Mammary epithelial cell (primary cell): ENCODE measurements at regions of chr6 and their contacts with region 1.

Region 1: GRCh38 chr6:47787620-47788497 is 6.0 kb downstream of the OPN5 start:
- DNase-seq: peak; percentile 98
- H3K4me3 ChIP-seq: no peak overlapping the region
- H3K27ac ChIP-seq: peak overlapping the region; percentile 94
- H3K4me1 ChIP-seq: peaks cover 19% of the 10 kb centered on the region
- H3K27me3 ChIP-seq: no peaks in the 10 kb centered on the region
- CTCF ChIP-seq: peak; percentile 88 to 93

Region 2: GRCh38 chr6:48078120-48078519 is 290.3 kb after region 1 on chr6:
- CTCF ChIA-PET with region 1: interaction called, 3 read pairs
- dilution Hi-C with region 1: no loop called
- in situ Hi-C with region 1: no loop called
- intact Hi-C with region 1: loop called (anchors 2 kb)
- DNase-seq: peak; percentile 57
- H3K4me3 ChIP-seq: no peak overlapping the region
- H3K27ac ChIP-seq: no peak overlapping the region
- H3K4me1 ChIP-seq: peaks cover 14% of the 10 kb centered on the region
- H3K27me3 ChIP-seq: no peaks in the 10 kb centered on the region
- CTCF ChIP-seq: no peak

Region 3: GRCh38 chr6:48449002-48449401 is 661.1 kb after region 1 on chr6:
- CTCF ChIA-PET with region 1: no interaction called
- dilution Hi-C with region 1: no loop called
- in situ Hi-C with region 1: no loop called
- intact Hi-C with region 1: loop called (anchors 1 kb)
- DNase-seq: peak; percentile 14
- H3K4me3 ChIP-seq: no peak overlapping the region
- H3K27ac ChIP-seq: no peak overlapping the region
- H3K4me1 ChIP-seq: no peaks in the 10 kb centered on the region
- H3K27me3 ChIP-seq: no peaks in the 10 kb centered on the region
- CTCF ChIP-seq: peak; percentile 14 to 49

Region 4: GRCh38 chr6:48765352-48765961 is 977.6 kb after region 1 on chr6:
- CTCF ChIA-PET with region 1: interaction called, 9 read pairs
- dilution Hi-C with region 1: no loop called
- in situ Hi-C with region 1: loop called (anchors 10 to 25 kb)
- intact Hi-C with region 1: loop called (anchors 1 kb)
- DNase-seq: peak; percentile 58
- H3K4me3 ChIP-seq: no peak overlapping the region
- H3K27ac ChIP-seq: peak overlapping the region; percentile 62
- H3K4me1 ChIP-seq: peaks cover 17% of the 10 kb centered on the region
- H3K27me3 ChIP-seq: no peaks in the 10 kb centered on the region
- CTCF ChIP-seq: peak; percentile 64 to 75

Region 5: DNA sequence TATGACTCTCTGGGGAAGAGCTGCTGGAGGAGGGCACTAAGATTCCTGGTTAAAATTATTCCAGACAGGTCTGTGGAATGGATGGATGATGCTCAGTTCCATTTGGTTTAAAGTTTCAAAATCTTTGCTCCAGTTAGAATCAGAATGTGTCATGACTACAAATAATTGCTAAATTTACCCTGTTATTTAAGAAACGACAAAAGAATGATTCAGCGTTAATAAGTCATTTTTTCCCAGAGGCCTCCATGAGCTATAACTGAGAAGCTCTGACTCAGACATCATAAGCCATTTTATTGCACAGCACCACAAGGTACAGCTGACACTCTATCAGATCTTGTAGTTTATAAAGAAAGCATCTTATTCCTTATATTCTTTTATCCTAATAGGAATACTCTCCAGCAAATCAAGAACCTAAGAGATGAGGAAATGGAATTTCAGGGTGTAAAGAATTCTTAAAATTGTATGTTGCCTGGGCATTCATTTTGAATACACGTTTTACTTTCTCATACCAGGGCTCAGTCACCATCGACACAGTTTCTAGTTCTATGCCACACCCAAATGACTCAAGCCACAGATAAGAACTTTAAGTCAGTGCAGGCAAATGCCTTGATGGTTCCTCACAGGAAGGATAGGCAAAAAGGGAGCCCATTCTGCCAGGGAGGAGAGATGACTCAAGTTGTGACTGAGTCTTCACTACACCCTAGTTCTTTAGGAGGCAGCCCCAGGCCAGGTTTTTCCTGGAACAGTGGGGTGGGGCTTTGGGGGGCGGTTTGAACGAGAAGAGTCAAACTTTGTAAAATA is 1039.2 kb after region 1 on chr6:
- CTCF ChIA-PET with region 1: no interaction called
- dilution Hi-C with region 1: no loop called
- in situ Hi-C with region 1: no loop called
- intact Hi-C with region 1: loop called (anchors 2 kb)
- DNase-seq: peak; percentile 100
- H3K4me3 ChIP-seq: peak overlapping the region in 2 of 3 experiments; percentile 8 to 12
- H3K27ac ChIP-seq: peak overlapping the region; percentile 98
- H3K4me1 ChIP-seq: peaks cover 22% of the 10 kb centered on the region
- H3K27me3 ChIP-seq: no peaks in the 10 kb centered on the region
- CTCF ChIP-seq: no peak

Region 6: GRCh38 chr6:49423817-49424216 is 1636.0 kb after region 1 on chr6:
- CTCF ChIA-PET with region 1: no interaction called
- dilution Hi-C with region 1: no loop called
- in situ Hi-C with region 1: loop called (anchors 10 kb)
- intact Hi-C with region 1: loop called (anchors 1 kb)
- DNase-seq: peak; percentile 10
- H3K4me3 ChIP-seq: no peak overlapping the region
- H3K27ac ChIP-seq: no peak overlapping the region
- H3K4me1 ChIP-seq: no peaks in the 10 kb centered on the region
- H3K27me3 ChIP-seq: no peaks in the 10 kb centered on the region
- CTCF ChIP-seq: peak; percentile 14 to 51

Region 7: GRCh38 chr6:49531774-49532569 is 1744.1 kb after region 1 on chr6:
- CTCF ChIA-PET with region 1: no interaction called
- dilution Hi-C with region 1: no loop called
- in situ Hi-C with region 1: no loop called
- intact Hi-C with region 1: loop called (anchors 5 kb)
- DNase-seq: peak; percentile 70
- H3K4me3 ChIP-seq: no peak overlapping the region
- H3K27ac ChIP-seq: no peak overlapping the region
- H3K4me1 ChIP-seq: no peaks in the 10 kb centered on the region
- H3K27me3 ChIP-seq: no peaks in the 10 kb centered on the region
- CTCF ChIP-seq: peak; percentile 87 to 94